ENCODE measurements at regions of chrX and their contacts with region 1.

Region 1: GRCh38 chrX:30141966-30142365 is 73.4 kb upstream of the MAGEB2 start:
- DNase-seq: no peak
- CTCF ChIP-seq: peak; percentile 16

Region 2: GRCh38 chrX:30488092-30488491 is 346.1 kb after region 1 on chrX:
- in situ Hi-C with region 1: loop called (anchors 25 kb)
- DNase-seq: peak; percentile 27
- CTCF ChIP-seq: peak; percentile 11

Measured in GM13976 (cell line).